ENCODE measurements at regions of chr15 and their contacts with region 1.

Region 1: GRCh38 chr15:72923304-72923703 is 129.0 kb upstream of the NEO1 start:
- DNase-seq: no peak
- H3K4me3 ChIP-seq: no peak overlapping the region
- H3K27ac ChIP-seq: no peak overlapping the region
- H3K4me1 ChIP-seq: no peaks in the 10 kb centered on the region
- H3K27me3 ChIP-seq: peaks cover 0 to 4% of the 10 kb centered on the region in 2 experiments
- CTCF ChIP-seq: no peak
- POLR2A ChIP-seq: no peak

Region 2: DNA sequence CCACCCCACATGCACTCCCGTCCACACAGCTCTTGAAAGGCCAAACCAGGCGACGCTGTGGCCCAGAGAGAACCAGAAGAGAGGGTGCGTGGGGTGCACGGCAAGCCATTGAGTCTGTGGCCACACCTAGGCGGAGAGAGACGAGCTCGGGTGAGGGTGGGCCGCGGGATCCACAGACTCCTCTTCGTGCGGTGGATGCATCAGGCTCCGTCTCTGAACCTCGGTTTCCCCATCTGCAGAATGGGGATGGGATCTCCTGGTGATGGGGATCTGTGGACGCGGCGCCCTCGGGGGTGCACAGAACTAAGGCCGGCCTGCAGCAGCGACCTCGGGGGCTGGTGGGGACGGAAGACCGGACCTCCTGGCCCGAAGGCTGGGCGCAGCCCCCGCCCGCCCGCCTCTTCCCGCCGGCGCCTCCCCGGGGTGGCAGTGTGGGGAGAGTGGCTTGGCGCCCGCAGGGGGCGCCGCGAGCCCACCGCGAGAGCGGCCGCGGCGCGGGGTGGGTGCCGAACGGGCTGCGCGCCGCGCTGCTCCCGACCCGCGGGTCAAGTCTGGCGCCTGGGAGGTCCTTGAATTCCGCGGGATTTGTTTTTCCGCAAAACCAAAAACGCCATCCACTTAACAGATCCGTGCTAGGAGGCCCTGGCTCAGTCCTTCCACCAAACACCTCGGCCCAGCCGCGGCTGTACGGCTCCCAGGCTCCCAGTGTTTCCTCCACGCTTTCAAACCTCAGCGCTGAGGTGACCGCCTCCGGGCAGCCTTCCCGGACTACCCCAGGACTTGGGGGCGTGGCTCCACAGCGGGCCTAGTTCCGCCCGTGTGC is 126.6 kb before region 1 on chr15:
- CTCF ChIA-PET with region 1: no interaction called
- POLR2A ChIA-PET with region 1: no interaction called
- dilution Hi-C with region 1: no loop called
- intact Hi-C with region 1: loop called (anchors 5 kb)
- DNase-seq: peak; percentile 2
- H3K4me3 ChIP-seq: peak overlapping the region in 2 of 3 experiments; percentile 25 to 40
- H3K27ac ChIP-seq: no peak overlapping the region
- H3K4me1 ChIP-seq: peaks cover 6% of the 10 kb centered on the region
- H3K27me3 ChIP-seq: peaks cover 47 to 51% of the 10 kb centered on the region in 2 experiments
- CTCF ChIP-seq: peak; percentile 30 to 38
- POLR2A ChIP-seq: no peak